ENCODE measurements at regions of chr6 and their contacts with region 1.

Region 1: DNA sequence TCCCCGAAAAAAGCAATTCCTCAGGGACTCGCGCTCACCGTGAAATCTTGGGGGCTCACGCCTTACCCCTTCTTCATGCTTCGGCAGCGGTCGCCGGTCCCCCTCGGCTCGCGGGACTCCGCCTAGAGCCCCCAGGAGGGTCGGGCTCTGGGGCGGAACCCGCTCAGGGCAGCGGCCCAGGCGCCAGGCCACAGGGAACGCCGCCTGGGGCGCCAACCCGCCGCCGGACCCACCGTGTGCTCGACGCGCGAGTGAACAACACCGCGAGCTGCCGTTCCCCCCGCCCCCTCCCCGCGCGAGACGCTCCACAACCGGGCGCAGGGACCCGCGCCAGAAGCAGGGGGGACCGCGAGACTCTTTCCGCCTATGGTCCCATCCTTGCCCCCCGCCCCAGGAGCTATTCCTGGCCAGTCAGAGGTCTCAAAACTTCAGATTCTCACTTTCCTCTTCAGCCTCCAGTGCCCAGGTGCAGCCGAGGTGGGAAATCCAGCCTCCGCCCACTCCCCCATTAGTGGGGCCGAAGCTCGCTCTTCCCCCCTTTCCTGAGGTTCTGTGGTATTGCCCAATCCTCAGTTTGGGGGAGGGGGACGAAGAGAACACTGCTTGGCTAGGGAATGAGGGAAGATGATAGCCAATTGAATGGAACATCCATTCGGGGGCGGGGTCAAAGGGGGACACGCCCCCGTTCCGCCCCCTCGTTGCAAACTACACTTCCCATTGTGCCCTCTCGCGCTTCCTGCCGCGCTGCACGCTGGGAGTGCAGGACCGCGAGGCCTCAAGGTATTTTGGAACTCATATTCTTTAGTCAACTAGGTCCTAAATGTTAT is at the start of gene WASF1:
- DNase-seq: peak; percentile 97
- ATAC-seq: peak; percentile 99
- total RNA-seq, gene WASF1: 1.2 TPM

Region 2: DNA sequence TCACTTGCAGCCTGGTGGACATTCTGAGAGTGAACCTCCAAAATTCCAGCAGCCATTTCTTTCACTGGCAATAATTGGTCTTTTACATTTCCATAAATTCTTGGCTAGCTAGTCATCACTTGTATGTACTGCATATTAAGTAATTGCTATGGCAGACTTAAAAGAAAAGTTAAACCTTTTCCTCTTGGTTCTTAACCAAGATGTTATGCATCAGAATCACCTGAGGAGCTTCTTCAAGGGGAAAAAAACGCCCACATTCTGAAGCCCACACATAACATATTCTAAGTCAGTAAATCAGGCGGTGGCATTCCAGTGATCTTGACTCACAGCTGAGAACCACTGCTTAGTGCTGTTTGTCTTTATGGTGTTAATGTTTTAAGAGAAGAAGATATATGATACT is 37.7 kb after region 1 on chr6:
- intact Hi-C with region 1: no loop called
- DNase-seq: no peak
- ATAC-seq: no peak

Region 3: DNA sequence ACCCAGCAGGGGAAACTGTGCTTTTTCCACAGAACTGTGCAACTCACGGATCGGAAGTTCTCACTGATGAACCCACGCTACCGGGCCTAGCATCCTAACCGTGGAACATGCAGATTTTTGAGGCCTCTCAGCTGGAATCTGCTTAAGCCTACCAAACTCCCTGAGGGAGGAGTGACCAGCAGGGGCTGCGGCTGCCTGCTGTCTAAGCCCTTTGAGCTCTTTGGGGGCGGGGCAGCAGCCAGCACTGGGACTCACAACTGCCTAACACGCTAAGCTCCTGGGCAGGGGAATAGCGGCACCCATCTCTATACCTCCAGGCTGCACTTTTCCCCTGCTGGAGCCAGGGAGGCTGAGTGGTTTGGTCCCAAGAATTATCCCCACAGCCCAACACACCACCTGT is 198.9 kb after region 1 on chr6:
- intact Hi-C with region 1: loop called (anchors 5 kb)
- DNase-seq: no peak
- ATAC-seq: no peak